ENCODE measurements at regions of chr15 and their contacts with region 1.

Region 1: GRCh38 chr15:81480645-81481053 is 106.6 kb upstream of the TMC3 start:
- DNase-seq: no peak
- ATAC-seq: peak; percentile 52 to 78 (median 60)
- H3K4me3 ChIP-seq: no peak overlapping the region
- H3K27ac ChIP-seq: no peak overlapping the region
- H3K4me1 ChIP-seq: no peaks in the 10 kb centered on the region
- H3K27me3 ChIP-seq: no peaks in the 10 kb centered on the region
- CTCF ChIP-seq: peak; percentile 92

Region 2: DNA sequence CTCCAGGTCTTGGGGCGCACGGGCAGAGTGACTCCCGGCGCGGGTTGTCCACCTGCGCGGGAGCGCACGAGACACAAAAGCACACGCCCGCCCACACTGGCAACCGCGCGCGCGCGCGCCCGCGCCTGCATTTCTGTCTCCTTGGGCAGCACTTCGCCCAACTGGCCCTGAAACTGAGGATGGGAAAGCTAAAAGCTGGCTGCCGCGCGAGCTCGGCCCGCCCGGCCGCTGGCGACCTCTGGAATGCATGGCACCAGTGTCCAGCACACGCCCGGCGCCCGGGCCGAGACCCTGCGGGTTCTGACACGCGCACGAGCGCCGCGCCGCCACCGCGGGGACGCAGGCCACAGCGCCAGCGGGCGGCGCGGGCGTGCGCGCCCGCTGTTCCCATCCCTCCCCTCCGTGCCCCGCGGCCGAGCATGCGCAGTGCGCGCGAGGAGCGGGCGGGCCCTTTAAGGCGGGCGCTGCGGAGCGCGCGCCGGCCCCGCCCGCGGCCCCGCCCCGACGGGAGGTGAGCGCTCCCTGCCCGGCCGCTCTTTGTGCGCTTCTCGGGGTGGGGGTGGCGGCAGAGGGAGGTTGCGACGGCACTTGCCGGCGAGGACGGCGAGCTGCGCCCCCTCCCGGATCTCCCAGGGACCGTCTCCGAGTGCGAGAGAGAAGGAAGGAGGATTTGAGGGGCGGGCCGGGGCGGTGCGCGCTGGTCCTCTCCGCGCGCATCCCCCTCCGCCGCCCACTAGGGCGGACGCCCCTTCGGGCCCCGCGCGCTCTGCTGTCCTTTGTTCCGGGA is 566.2 kb after region 1 on chr15:
- intact Hi-C with region 1: loop called (anchors 2 kb)
- DNase-seq: peak; percentile 94 to 96
- ATAC-seq: peak; percentile 83 to 87 (median 86)
- H3K4me3 ChIP-seq: peak overlapping the region; percentile 91
- H3K27ac ChIP-seq: peak overlapping the region; percentile 92
- H3K4me1 ChIP-seq: peaks cover 9% of the 10 kb centered on the region
- H3K27me3 ChIP-seq: no peaks in the 10 kb centered on the region
- CTCF ChIP-seq: peak; percentile 63

Region 3: GRCh38 chr15:82108489-82109078 is 627.9 kb after region 1 on chr15:
- intact Hi-C with region 1: loop called in 1 of 2 experiments (anchors 5 kb)
- DNase-seq: peak; percentile 51 to 80
- ATAC-seq: peak; percentile 91 to 99 (median 98)
- H3K4me3 ChIP-seq: no peak overlapping the region
- H3K27ac ChIP-seq: no peak overlapping the region
- H3K4me1 ChIP-seq: no peaks in the 10 kb centered on the region
- H3K27me3 ChIP-seq: no peaks in the 10 kb centered on the region
- CTCF ChIP-seq: peak; percentile 88

Region 4: DNA sequence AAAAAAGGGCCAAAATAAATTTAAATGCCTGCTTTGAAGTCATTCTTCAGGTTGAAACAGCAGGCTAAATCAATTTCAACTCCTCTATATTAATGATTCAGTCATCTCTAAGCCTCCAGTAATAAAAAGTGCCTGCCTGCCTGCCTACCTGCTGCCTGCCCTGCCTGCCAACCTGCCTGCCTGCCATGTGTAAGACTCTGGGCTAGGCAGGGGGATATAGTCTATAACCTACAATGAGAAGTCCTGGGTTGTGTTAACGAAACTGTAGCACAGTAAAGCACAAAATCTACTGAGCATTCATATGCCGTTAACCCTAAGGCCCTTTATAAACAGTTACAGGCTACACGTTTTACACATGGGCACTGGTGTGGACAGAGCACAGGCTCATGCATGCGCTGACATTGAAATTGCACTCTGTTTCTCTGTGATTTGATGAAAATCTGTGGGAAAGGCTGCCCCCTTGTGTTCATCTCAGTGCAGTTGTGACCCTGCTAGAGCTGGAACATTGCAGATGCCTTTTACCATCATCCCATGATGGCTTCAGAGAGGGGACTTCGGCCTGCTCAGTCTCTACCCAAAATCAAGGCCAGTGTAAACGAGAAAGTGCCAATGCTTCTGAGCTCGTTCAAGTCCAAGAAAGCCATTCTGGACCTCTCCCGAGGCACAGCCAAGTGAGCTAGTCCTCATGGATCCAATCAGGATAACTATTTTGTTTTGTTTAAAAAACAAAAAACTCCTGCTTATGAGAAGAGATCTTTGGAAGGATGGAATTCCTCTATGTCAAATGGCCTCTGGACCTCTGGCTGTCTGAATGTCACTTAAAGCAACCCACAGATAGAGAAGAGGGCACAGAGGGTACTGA is 717.3 kb after region 1 on chr15:
- intact Hi-C with region 1: loop called in 1 of 2 experiments (anchors 2 kb)
- DNase-seq: peak; percentile 39 to 67
- ATAC-seq: peak; percentile 70 to 87 (median 80)
- H3K4me3 ChIP-seq: no peak overlapping the region
- H3K27ac ChIP-seq: no peak overlapping the region
- H3K4me1 ChIP-seq: peaks cover 19% of the 10 kb centered on the region
- H3K27me3 ChIP-seq: no peaks in the 10 kb centered on the region
- CTCF ChIP-seq: peak; percentile 82